Mammary epithelial cell (primary cell): ENCODE measurements at regions of chr19 and their contacts with region 1.

Region 1: GRCh38 chr19:51079481-51080110 is 3.1 kb downstream of the KLK14 start:
- DNase-seq: no peak
- H3K4me3 ChIP-seq: no peak overlapping the region
- H3K27ac ChIP-seq: no peak overlapping the region
- H3K4me1 ChIP-seq: no peaks in the 10 kb centered on the region
- H3K27me3 ChIP-seq: no peaks in the 10 kb centered on the region
- CTCF ChIP-seq: no peak

Region 2: DNA sequence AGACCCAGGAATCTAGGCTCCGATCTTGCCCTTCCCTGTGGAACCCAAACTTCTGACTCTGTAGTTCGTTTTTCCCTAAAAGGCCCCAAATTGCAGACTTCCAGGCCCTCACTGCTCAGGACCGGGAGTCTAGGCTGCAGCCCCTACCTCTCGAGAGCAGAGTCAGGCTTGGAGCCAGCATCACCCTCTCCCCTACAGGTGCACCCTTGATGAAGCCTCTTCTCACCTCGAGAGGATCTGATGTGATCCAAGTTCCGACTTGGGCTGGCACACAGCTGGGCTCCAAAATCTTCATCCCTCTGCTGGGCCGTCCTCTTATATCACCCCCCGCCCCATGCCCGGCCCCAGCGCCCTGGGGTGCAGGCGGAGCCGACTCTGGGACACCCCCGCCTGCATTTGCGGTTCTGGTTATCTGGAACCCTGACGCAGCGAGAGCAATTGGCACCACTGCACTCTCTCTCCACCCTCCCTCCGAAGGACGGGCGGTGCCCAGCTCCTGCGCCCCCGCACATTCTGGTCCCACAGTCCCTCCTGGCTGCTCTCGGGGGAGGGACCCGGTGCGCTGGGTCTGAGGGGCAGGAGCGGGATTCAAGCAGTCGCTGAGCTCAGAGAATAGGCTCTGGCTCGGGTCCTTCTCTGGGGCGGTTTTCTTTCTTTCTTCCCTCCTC is 95.8 kb before region 1 on chr19 and contains the start of gene KLK7:
- CTCF ChIA-PET with region 1: no interaction called
- dilution Hi-C with region 1: no loop called
- in situ Hi-C with region 1: no loop called
- intact Hi-C with region 1: no loop called
- DNase-seq: peak; percentile 70
- H3K4me3 ChIP-seq: peak within 1 kb of the TSS; percentile 25 to 56 (median 41)
- H3K27ac ChIP-seq: peak within 1 kb of the TSS; percentile 49
- H3K4me1 ChIP-seq: peaks cover 28% of the 10 kb centered on the region
- H3K27me3 ChIP-seq: no peaks in the 10 kb centered on the region
- CTCF ChIP-seq: no peak
- total RNA-seq, gene KLK7: 47.3 to 584 TPM

Region 3: DNA sequence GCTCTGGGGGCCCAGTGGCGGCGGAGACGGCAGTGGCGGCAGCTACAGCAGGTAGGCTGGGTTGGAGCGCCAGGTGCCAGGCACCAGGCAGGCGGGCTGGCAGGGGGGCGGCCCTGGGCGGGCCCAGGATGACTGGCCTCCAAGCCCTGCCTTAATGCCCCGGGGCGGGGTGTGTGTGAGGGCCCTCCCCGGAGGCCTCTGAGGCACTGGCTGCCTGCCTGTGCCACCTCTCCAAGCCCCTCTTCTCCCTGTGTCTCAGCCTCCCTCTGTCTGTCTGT is 53.1 kb before region 1 on chr19 and contains the start of gene KLK11:
- CTCF ChIA-PET with region 1: no interaction called
- dilution Hi-C with region 1: loop called (anchors 5 kb)
- in situ Hi-C with region 1: no loop called
- intact Hi-C with region 1: no loop called
- DNase-seq: peak; percentile 45
- H3K4me3 ChIP-seq: no peak within 1 kb of the TSS
- H3K27ac ChIP-seq: no peak within 1 kb of the TSS
- H3K4me1 ChIP-seq: peaks cover 13% of the 10 kb centered on the region
- H3K27me3 ChIP-seq: no peaks in the 10 kb centered on the region
- CTCF ChIP-seq: no peak
- total RNA-seq, gene KLK11: 2.3 to 2.5 TPM